PC-9 (cell line): ENCODE measurements at regions of chr3 and their contacts with region 1.

Region 1: DNA sequence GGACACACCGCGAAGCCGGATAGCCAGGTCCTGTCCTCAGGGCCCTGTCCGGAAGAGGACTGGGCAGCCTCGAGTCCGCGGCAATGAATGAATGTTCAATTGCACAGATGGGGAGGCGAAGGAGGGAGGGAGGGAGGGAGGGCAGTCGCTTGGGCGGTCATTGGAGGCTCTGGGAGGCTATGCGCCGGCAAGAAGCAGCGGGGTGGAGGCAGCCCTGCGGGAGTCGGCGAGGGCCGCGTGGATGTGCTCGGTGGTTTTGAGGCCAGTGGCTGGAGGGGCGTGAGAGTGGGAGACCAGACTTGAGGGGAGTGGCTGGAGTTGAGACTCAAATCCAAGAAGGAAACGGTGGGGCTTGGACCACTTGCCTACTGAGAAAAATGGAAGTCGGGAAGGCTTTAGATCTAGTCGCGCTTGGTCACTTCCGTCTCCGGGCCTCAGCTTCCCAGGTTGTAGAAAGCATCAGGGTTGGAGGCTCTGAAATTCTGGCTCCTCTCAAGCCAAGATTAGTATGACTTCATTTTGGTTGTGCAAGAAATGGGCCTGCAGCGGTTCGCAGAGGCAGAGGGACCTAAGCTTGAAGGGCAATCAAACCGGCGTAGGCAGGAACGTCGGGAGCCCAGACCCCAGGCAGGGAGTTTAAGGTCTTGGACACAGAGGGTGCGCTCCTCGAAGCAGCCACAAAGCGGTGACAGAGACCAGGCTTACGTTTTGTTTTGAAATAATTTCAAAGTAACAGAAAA is 21.1 kb upstream of the PLXND1 start:
- DNase-seq: peak; percentile 81 to 85
- H3K4me3 ChIP-seq: peak overlapping the region; percentile 99
- H3K27ac ChIP-seq: peak overlapping the region; percentile 96
- H3K4me1 ChIP-seq: peaks cover 27% of the 10 kb centered on the region
- H3K27me3 ChIP-seq: no peaks in the 10 kb centered on the region
- CTCF ChIP-seq: peak; percentile 92

Region 2: DNA sequence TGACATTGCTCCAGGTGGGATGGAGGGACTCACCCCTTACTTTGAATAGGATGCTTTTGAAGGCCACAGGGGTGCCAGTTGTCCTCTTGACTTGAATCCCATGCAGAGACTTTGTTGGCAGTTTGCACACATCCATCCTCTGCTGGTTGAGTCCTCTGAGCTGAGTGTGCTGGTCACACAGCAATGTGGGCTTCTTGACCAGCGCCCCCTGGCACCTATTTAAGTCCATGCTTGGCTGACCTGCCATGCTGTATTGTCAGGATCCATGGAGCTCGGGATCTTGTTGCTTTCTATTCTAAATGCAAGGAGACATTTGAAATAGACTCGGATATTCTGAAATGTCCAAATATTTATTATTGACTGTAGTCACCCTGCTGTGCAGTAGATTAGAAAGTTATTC is 881.9 kb before region 1 on chr3:
- CTCF ChIA-PET with region 1: no interaction called
- POLR2A ChIA-PET with region 1: no interaction called
- intact Hi-C with region 1: no loop called
- DNase-seq: no peak
- H3K4me3 ChIP-seq: no peak overlapping the region
- H3K27ac ChIP-seq: no peak overlapping the region
- H3K4me1 ChIP-seq: no peaks in the 10 kb centered on the region
- H3K27me3 ChIP-seq: no peaks in the 10 kb centered on the region
- CTCF ChIP-seq: no peak; the same call in 1 of the 2 replicates

Region 3: GRCh38 chr3:129323651-129324294 is 303.8 kb before region 1 on chr3:
- CTCF ChIA-PET with region 1: no interaction called
- POLR2A ChIA-PET with region 1: interaction called, 5 read pairs
- intact Hi-C with region 1: loop called (anchors 1 kb)
- DNase-seq: no peak
- H3K4me3 ChIP-seq: no peak overlapping the region
- H3K27ac ChIP-seq: no peak overlapping the region
- H3K4me1 ChIP-seq: no peaks in the 10 kb centered on the region
- H3K27me3 ChIP-seq: no peaks in the 10 kb centered on the region
- CTCF ChIP-seq: no peak; the same call in 1 of the 2 replicates

Region 4: DNA sequence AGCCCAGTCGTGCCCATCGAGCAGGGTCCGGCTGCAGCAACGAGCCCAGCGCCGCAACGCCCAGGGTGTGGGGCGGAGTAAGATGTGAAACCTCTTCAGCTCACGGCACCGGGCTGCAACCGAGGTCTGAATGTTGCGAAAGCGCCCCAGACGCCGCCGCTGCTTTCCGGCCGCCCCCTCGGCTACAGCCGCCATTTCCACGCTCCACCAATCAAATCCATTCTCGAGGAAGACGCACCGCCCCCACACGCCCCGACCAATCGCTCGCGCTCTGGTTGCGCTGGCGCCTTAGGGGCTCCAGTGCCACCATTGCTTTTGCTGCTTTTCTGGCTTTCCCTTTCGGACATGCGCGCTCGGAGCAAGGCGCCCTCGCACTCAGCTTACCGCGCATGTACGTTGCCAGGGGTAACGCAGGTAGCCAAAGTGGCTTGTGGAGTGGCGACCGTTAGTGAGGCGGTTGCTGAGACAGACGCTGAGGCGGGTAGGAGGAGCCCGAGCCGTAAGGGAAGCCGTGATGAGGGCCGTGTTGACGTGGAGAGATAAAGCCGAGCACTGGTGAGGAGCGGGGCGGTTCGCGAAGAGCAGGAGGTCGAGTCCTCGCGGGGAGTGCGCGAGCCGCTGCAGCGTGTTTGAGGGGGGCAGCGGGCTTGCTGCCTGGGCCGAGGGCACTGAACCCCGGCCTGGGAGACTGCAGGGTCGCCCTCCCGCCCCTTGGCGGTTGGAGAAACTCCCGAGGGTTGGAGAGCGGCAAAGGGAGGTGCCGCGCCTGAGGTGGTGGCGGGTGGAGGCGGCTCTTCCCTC is 187.6 kb before region 1 on chr3 and contains the starts of genes IFT122 and MBD4:
- CTCF ChIA-PET with region 1: no interaction called
- POLR2A ChIA-PET with region 1: interaction called, 16 read pairs
- intact Hi-C with region 1: loop called (anchors 2 kb)
- DNase-seq: peak; percentile 97 to 99
- H3K4me3 ChIP-seq: peak within 1 kb of the TSS; percentile 79
- H3K27ac ChIP-seq: peak within 1 kb of the TSS; percentile 62
- H3K4me1 ChIP-seq: peaks cover 38% of the 10 kb centered on the region
- H3K27me3 ChIP-seq: no peaks in the 10 kb centered on the region
- CTCF ChIP-seq: no peak
- total RNA-seq, gene IFT122: 44.8 and 55.6 TPM in 2 replicates
- total RNA-seq, gene MBD4: 48.6 and 49.4 TPM in 2 replicates

Region 5: DNA sequence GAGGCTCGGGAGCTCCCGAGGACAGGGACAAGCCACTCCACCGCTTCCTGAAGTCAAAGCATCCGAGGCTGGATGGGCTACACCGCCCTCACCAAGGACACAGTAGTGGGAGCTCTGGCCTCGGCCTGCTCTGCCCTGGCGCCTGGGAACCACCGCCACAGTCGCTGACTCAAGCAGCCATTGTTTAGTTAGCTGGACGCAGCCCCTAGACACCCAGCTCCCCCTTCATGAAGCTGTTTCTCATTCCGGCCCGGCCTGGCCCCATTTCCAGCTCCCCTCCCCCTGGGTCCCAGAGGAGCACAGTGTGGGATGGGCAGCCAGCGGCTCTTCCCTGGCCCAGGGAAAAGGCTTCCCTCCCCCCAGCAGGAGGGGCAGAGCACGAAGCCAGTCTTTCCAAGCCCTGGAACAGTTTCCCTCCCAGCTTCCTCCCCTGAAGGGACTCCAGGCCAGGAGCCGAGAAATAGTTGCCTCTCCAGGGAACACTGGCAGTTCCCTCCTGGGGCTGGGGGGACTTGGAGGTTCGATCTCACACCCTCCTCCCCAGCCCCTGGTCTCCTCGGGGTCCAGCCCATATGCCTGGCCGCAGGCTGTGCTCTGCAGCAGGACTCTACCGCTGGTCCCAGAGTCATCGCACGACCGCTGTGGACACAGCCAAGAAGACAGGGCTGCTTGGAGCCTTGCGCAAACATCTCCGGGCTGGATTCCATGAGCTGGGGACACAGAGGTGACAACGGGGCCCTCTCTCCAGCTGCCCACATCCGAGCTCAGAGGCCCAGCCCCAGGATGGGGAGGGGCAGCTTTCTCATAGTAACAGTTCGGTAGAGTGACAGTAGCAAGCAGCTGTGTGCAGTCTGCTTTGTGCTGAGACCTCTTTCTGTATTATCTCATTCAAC is 31.2 kb before region 1 on chr3:
- CTCF ChIA-PET with region 1: interaction called, 11 read pairs
- POLR2A ChIA-PET with region 1: interaction called, 10 read pairs
- intact Hi-C with region 1: no loop called
- DNase-seq: peak in 1 of 2 experiments; percentile 54
- H3K4me3 ChIP-seq: no peak overlapping the region
- H3K27ac ChIP-seq: no peak overlapping the region
- H3K4me1 ChIP-seq: no peaks in the 10 kb centered on the region
- H3K27me3 ChIP-seq: no peaks in the 10 kb centered on the region
- CTCF ChIP-seq: no peak

Region 6: DNA sequence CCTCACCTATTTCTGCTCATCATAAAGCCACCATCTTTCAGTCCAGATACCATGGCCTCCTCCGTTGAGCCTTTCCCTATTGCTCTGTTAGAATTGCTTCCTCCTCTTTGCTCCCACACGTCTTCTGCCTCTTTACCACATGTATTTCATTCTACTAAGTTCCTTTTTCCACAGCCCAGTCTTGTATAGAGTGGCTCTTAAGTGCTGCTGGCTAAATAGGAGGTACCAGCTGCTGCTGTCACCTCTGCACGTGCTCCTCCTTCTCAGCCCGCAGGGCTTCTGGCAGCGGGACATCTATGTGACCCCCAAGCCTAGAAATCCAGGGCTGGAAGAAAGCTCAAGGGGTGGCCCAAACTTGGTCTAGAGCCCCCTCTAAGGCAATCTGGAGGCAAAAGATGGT is 17.7 kb after region 1 on chr3:
- CTCF ChIA-PET with region 1: no interaction called
- POLR2A ChIA-PET with region 1: no interaction called
- intact Hi-C with region 1: no loop called
- DNase-seq: no peak
- H3K4me3 ChIP-seq: no peak overlapping the region
- H3K27ac ChIP-seq: peak overlapping the region; percentile 74
- H3K4me1 ChIP-seq: peaks cover 43% of the 10 kb centered on the region
- H3K27me3 ChIP-seq: no peaks in the 10 kb centered on the region
- CTCF ChIP-seq: no peak

Region 7: GRCh38 chr3:129794311-129795185 is 166.9 kb after region 1 on chr3:
- CTCF ChIA-PET with region 1: no interaction called
- POLR2A ChIA-PET with region 1: interaction called, 9 read pairs
- intact Hi-C with region 1: loop called (anchors 1 kb)
- DNase-seq: peak; percentile 93 to 99
- H3K4me3 ChIP-seq: peak overlapping the region; percentile 96
- H3K27ac ChIP-seq: peak overlapping the region; percentile 100
- H3K4me1 ChIP-seq: peaks cover 45% of the 10 kb centered on the region
- H3K27me3 ChIP-seq: no peaks in the 10 kb centered on the region
- CTCF ChIP-seq: no peak

Region 8: GRCh38 chr3:129934234-129935123 is 306.9 kb after region 1 on chr3:
- CTCF ChIA-PET with region 1: interaction called, 3 read pairs
- POLR2A ChIA-PET with region 1: no interaction called
- intact Hi-C with region 1: loop called (anchors 1 kb)
- DNase-seq: peak in 1 of 2 experiments; percentile 26
- H3K4me3 ChIP-seq: no peak overlapping the region
- H3K27ac ChIP-seq: no peak overlapping the region
- H3K4me1 ChIP-seq: no peaks in the 10 kb centered on the region
- H3K27me3 ChIP-seq: no peaks in the 10 kb centered on the region
- CTCF ChIP-seq: peak; percentile 98